SK-N-SH (cell line): ENCODE measurements at regions of chr6 and their contacts with region 1.

Region 1: DNA sequence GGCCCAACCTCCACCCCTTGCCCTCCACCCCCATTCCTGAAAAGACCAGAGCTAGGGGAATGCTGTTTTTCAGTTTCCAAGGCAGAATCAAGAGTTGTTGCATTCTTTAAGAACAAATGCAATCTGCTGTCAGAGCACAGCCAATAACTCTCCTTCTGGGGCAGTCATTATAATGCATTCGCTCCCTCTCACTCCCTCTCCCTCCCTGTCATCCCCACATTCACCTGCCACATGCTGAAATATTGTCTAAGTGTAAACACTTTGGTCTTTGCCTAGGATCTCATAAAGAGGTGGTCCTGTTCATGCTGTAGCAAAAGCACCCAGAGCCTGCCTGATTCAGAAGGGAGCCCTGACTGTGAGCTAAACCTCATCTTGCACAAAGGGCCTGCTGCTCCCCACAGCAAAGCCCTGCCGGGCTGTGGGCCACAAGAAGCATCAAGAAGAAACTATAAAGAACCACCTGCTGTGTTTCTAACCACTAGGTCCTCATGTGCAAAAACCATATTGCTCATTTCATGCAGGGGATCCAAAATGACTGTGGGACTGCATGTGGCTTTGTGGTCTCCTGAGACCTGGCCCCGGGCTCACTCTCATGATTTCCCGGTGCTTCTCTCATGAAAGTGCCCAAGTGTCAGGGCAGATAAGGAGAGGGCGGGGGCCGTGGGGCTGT is 85.6 kb downstream of the GPR6 start:
- DNase-seq: no peak
- H3K4me3 ChIP-seq: no peak overlapping the region
- H3K27ac ChIP-seq: no peak overlapping the region
- H3K4me1 ChIP-seq: peaks cover 0 to 2% of the 10 kb centered on the region in 2 experiments; a peak in 1 of 4 replicates
- H3K27me3 ChIP-seq: no peaks in the 10 kb centered on the region; the same call in 1 of the 2 replicates
- CTCF ChIP-seq: no peak
- EP300 ChIP-seq: no peak
- RAD21 ChIP-seq: no peak

Region 2: GRCh38 chr6:110053395-110054240 is 10.1 kb before region 1 on chr6:
- CTCF ChIA-PET with region 1: interaction called, 24 read pairs
- POLR2A ChIA-PET with region 1: no interaction called
- DNase-seq: peak; percentile 59
- H3K4me3 ChIP-seq: no peak overlapping the region
- H3K27ac ChIP-seq: no peak overlapping the region
- H3K4me1 ChIP-seq: no peaks in the 10 kb centered on the region; a peak in 2 of 4 replicates
- H3K27me3 ChIP-seq: no peaks in the 10 kb centered on the region
- CTCF ChIP-seq: peak; percentile 80
- EP300 ChIP-seq: no peak
- RAD21 ChIP-seq: peak; percentile 85

Region 3: DNA sequence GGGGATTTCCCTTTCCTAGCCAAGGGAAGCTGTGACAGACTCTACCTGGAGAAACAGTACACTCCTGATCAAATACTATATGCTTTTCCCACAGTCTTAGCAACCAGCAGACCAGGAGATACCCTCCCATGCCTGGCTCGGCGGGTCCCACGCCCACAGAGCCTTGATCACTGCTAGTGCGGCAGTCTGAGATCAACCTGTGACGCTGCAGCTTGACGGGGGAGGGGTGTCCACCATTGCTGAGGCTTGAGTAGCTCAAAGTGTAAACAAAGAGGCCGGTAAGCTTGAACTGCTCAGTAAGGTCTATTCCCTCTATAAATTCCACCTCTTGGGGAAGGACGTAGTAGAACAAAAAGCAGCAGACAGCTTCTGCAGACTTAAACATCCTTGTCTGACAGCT is 52.5 kb after region 1 on chr6:
- CTCF ChIA-PET with region 1: no interaction called
- POLR2A ChIA-PET with region 1: no interaction called
- DNase-seq: no peak
- H3K4me3 ChIP-seq: no peak overlapping the region
- H3K27ac ChIP-seq: no peak overlapping the region
- H3K4me1 ChIP-seq: peaks cover 0 to 3% of the 10 kb centered on the region in 2 experiments; a peak in 2 of 4 replicates
- H3K27me3 ChIP-seq: no peaks in the 10 kb centered on the region
- CTCF ChIP-seq: no peak
- EP300 ChIP-seq: no peak
- RAD21 ChIP-seq: no peak

Region 4: GRCh38 chr6:110173506-110174132 is 109.9 kb after region 1 on chr6:
- CTCF ChIA-PET with region 1: no interaction called
- POLR2A ChIA-PET with region 1: no interaction called
- DNase-seq: peak; percentile 22
- H3K4me3 ChIP-seq: no peak overlapping the region; a peak in 1 of 4 replicates
- H3K27ac ChIP-seq: peak overlapping the region in 1 of 2 experiments; percentile 78; a peak in 2 of 4 replicates
- H3K4me1 ChIP-seq: peaks cover 0 to 24% of the 10 kb centered on the region in 2 experiments; a peak in 3 of 4 replicates
- H3K27me3 ChIP-seq: no peaks in the 10 kb centered on the region
- CTCF ChIP-seq: no peak
- EP300 ChIP-seq: no peak
- RAD21 ChIP-seq: no peak